Activated CD8-positive, alpha-beta T cell treated with anti-CD3 and anti-CD28 coated beads, Interleukin-2, amount 10 ng/mL, durations not matched to agents 7 days and 5 days (primary cell): ENCODE measurements at regions of chr2 and their contacts with region 1.

Region 1: GRCh38 chr2:112181571-112182290 is 43.5 kb downstream of the FBLN7 start:
- DNase-seq: peak; percentile 35
- ATAC-seq: peak; percentile 71
- H3K4me3 Mint-ChIP-seq: peak overlapping the region; percentile 0
- H3K27ac Mint-ChIP-seq: no peak overlapping the region
- H3K4me1 Mint-ChIP-seq: peaks cover 23% of the 10 kb centered on the region
- H3K27me3 Mint-ChIP-seq: peaks cover 31% of the 10 kb centered on the region

Region 2: GRCh38 chr2:112156152-112156986 is 25.4 kb before region 1 on chr2:
- CTCF ChIA-PET with region 1: interaction called, 4 read pairs
- POLR2A ChIA-PET with region 1: interaction called, 12 read pairs
- DNase-seq: peak; percentile 57
- ATAC-seq: peak; percentile 66
- H3K4me3 Mint-ChIP-seq: peak overlapping the region; percentile 47
- H3K27ac Mint-ChIP-seq: peak overlapping the region; percentile 81
- H3K4me1 Mint-ChIP-seq: peaks cover 31% of the 10 kb centered on the region
- H3K27me3 Mint-ChIP-seq: peaks cover 4% of the 10 kb centered on the region

Region 3: DNA sequence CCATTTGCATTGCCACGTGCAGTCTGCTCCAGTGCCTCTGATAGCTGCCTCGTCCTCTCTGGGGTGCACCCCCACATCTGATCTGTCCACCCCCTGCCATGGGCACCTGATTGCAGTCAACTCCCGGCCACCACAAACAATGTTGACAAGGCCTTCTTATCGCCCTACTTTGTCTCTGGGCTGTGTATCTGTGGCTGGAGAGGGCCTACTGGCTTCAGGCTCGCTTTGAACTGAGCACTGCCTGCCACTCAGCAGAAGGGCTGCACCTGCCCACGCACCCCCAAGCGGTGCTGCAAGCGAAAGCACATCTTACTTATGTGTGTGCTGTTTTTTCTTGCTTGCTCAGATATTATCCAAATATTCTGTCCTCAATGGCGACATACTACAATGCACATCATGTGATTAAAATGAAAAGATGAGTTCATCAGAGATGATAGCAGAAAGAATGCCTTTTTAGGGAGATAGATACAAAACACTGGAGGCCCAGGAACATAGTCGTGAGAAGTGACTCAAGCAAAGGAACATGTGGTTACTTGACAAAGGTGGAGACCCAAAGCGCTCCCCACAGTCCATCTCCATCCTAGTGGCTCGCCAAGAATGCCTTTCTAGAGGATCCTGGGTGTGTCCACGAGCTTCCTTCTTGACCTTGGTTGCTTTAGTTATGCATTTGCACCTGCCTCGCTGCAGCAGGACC is 14.8 kb before region 1 on chr2:
- CTCF ChIA-PET with region 1: no interaction called
- POLR2A ChIA-PET with region 1: no interaction called
- DNase-seq: no peak
- ATAC-seq: no peak
- H3K4me3 Mint-ChIP-seq: no peak overlapping the region
- H3K27ac Mint-ChIP-seq: no peak overlapping the region
- H3K4me1 Mint-ChIP-seq: peaks cover 5% of the 10 kb centered on the region
- H3K27me3 Mint-ChIP-seq: no peaks in the 10 kb centered on the region